ENCODE measurements at regions of chr10 and their contacts with region 1.

Region 1: GRCh38 chr10:124632064-124632531 is 112.1 kb downstream of the FAM53B start:
- DNase-seq: peak; percentile 8
- ATAC-seq: peak; percentile 62
- H3K4me3 ChIP-seq: no peak overlapping the region
- H3K27ac ChIP-seq: no peak overlapping the region
- H3K4me1 ChIP-seq: no peaks in the 10 kb centered on the region
- H3K27me3 ChIP-seq: no peaks in the 10 kb centered on the region
- CTCF ChIP-seq: peak; percentile 61
- EP300 ChIP-seq: no peak
- POLR2A ChIP-seq: no peak
- RAD21 ChIP-seq: peak; percentile 52; the same call in 1 of the 2 replicates

Region 2: DNA sequence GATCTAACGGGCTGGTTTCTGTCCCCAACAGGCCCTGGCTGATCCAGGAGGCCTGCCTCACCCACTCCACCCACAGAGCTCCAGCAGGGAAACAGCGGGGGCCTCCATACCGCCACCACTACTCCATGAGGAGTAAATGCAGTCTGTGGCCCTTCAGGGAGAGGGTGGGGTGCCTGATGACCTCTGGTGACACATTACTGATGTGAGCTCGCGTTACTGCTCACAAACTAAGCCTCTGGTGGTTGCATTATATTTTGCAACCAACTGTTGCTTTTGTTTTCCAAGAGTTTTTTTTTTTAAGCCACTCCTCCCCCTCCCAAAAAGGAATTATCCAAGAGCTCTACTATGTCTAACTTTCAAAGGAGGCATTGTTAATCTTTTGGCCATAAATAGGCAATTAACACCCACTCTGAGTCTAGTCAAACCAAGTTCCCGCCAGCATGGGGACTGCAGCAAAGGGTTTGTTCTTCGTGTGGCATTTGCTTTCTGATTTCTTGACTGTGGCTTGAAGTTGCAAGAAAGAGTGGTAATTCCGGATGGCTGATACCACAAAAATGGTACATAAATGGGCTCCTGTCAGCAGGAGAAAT is 39.5 kb after region 1 on chr10:
- CTCF ChIA-PET with region 1: no interaction called
- POLR2A ChIA-PET with region 1: no interaction called
- in situ Hi-C with region 1: no loop called
- intact Hi-C with region 1: loop called (anchors 1 kb)
- DNase-seq: peak; percentile 63
- ATAC-seq: peak; percentile 78
- H3K4me3 ChIP-seq: no peak overlapping the region
- H3K27ac ChIP-seq: no peak overlapping the region
- H3K4me1 ChIP-seq: peaks cover 1% of the 10 kb centered on the region; the same call in 1 of the 2 replicates
- H3K27me3 ChIP-seq: no peaks in the 10 kb centered on the region
- CTCF ChIP-seq: no peak
- EP300 ChIP-seq: no peak
- POLR2A ChIP-seq: no peak
- RAD21 ChIP-seq: no peak

Measured in HepG2 (cell line).